Spleen (tissue), 13 donors: ENCODE measurements at regions of chr9 and their contacts with region 1.

Region 1: DNA sequence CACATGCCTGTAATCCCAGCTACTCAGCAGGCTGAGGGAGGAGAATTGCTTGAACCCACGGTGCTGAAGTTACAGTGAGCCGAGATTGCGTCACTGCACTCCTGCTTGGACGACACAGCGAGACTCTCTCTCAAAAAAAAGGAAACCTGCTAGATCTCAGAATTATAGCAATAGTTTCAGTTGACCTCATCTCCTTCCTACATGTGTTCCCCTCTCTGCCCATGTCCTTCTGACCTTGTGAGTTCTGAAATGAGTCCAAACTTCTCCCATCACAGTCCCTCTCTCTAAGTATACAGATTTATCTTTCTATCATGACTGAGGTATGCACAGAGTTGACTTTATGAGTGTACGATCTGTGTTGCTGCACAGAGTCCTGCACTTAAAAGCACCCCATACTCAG is 44.7 kb upstream of the SHOC1 start:
- DNase-seq: peak; percentile 79
- H3K4me3 ChIP-seq: peak overlapping the region in 1 of 8 donors; percentile 19
- H3K27ac ChIP-seq: peak overlapping the region; percentile 28 to 86 (median 78)
- H3K4me1 ChIP-seq: peaks cover 3 to 67% (median 30%) of the 10 kb centered on the region in 6 donors
- H3K27me3 ChIP-seq: no peaks in the 10 kb centered on the region
- CTCF ChIP-seq: no peak
- POLR2A ChIP-seq: no peak

Region 2: GRCh38 chr9:111728621-111729366 is 110.6 kb before region 1 on chr9:
- intact Hi-C with region 1: no loop called
- DNase-seq: no peak
- H3K4me3 ChIP-seq: no peak overlapping the region
- H3K27ac ChIP-seq: no peak overlapping the region
- H3K4me1 ChIP-seq: no peaks in the 10 kb centered on the region
- H3K27me3 ChIP-seq: no peaks in the 10 kb centered on the region
- CTCF ChIP-seq: no peak
- POLR2A ChIP-seq: no peak

Region 3: GRCh38 chr9:111886983-111887711 is 47.8 kb after region 1 on chr9:
- intact Hi-C with region 1: loop called (anchors 10 kb)
- DNase-seq: no peak
- H3K4me3 ChIP-seq: no peak overlapping the region
- H3K27ac ChIP-seq: no peak overlapping the region
- H3K4me1 ChIP-seq: peaks cover 3 to 14% (median 8%) of the 10 kb centered on the region in 6 donors
- H3K27me3 ChIP-seq: no peaks in the 10 kb centered on the region
- CTCF ChIP-seq: no peak
- POLR2A ChIP-seq: no peak